Naive thymus-derived CD4-positive, alpha-beta T cell (primary cell): ENCODE measurements at regions of chr17 and their contacts with region 1.

Region 1: DNA sequence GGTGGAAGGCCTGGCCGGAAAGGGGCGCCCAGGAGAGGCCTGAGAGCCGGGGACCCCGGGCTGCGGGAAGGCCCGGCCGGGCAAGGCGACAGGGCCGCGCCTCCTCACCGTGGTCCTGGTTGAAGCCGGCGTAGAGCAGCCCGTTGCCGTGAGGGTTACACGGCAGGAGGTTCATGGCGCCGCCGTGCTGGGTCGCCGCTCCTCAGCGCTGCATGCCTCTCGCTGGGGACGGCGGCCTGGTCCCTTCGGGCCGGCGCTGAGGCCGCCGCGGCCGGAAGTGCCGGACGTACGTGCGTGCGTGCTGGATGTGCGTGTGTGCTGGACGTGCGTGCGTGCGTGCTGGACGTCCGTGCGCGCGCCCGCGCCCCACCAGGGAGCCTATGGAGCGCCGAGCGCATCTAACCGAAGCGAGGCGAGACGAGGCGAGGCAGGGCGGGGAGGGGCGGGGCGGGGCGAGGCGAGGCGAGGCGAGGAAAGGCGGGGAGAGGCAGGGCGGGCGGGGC is at the start of gene WDR45B:
- DNase-seq: peak; percentile 68 to 90 (median 87)
- ATAC-seq: peak; percentile 97
- H3K4me3 ChIP-seq: peak within 1 kb of the TSS; percentile 90
- H3K4me3 Mint-ChIP-seq: peak within 1 kb of the TSS; percentile 78 to 92 (median 84)
- H3K27ac ChIP-seq: peak within 1 kb of the TSS; percentile 94
- H3K27ac Mint-ChIP-seq: peak within 1 kb of the TSS; percentile 65 to 88 (median 83)
- H3K4me1 ChIP-seq: peaks cover 11 to 22% of the 10 kb centered on the region in 2 donors
- H3K4me1 Mint-ChIP-seq: peaks cover 23 to 39% (median 30%) of the 10 kb centered on the region in 7 donors
- H3K27me3 ChIP-seq: no peaks in the 10 kb centered on the region
- H3K27me3 Mint-ChIP-seq: no peaks in the 10 kb centered on the region
- total RNA-seq, gene WDR45B: 44.9 to 91.6 (median 68.4) TPM

Region 2: DNA sequence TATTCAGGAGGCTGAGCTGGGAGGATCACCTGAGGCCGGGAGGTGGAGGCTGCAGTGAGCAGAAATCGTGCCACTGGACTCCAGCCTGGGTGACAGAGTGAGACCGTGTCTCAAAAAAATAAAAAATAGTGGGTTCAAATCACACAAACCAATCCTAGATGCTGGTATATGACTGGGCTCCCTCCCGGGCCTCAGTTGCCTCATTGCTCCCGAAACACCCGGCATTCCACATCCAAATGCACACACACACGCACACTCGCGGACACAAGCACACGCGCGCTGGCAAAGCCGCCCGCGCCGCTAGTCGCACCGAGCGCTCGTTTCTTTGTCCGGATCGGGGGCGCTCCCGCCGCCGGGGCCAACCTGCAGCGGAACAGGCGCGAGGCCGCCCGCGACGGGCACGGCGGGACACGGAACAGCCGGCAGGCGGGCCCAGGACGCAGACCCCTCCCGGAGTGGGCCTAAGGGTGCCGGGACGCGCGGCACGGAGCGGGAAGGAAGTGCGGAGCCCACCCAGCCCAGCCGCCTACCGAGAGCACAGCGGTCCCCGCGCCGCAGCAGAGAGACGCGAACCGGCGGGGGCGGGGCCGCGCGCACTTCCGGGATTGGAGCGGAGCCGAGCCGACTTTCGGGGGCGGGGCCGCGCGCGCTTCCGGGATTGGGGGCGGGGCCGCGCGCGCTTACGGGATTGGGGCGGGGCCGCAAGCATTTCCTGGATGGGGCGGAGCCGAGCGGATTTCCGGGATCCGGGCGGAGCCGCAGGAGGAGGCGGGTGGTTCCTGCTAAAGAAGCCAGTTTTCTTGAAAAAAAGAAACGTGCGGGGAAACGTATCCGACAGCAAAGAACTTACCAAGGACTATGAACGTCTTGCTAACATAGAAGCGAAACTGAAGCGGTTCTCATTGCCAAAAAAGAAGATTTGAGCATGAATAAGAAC is 197.8 kb before region 1 on chr17 and contains the start of gene CYBC1:
- CTCF ChIA-PET with region 1: no interaction called
- POLR2A ChIA-PET with region 1: no interaction called
- intact Hi-C with region 1: loop called (anchors 1 kb)
- DNase-seq: peak; percentile 88 to 97 (median 94)
- ATAC-seq: peak; percentile 91
- H3K4me3 ChIP-seq: peak within 1 kb of the TSS; percentile 92
- H3K4me3 Mint-ChIP-seq: peak within 1 kb of the TSS; percentile 93 to 99 (median 98)
- H3K27ac ChIP-seq: peak within 1 kb of the TSS; percentile 86
- H3K27ac Mint-ChIP-seq: peak within 1 kb of the TSS; percentile 92 to 99 (median 97)
- H3K4me1 ChIP-seq: peaks cover 14 to 22% of the 10 kb centered on the region in 2 donors
- H3K4me1 Mint-ChIP-seq: peaks cover 22 to 49% (median 33%) of the 10 kb centered on the region in 7 donors
- H3K27me3 ChIP-seq: no peaks in the 10 kb centered on the region
- H3K27me3 Mint-ChIP-seq: no peaks in the 10 kb centered on the region
- total RNA-seq, gene CYBC1: 112 to 385 (median 199) TPM

Region 3: GRCh38 chr17:82494236-82495055 is 153.8 kb before region 1 on chr17:
- CTCF ChIA-PET with region 1: no interaction called
- POLR2A ChIA-PET with region 1: no interaction called
- intact Hi-C with region 1: loop called in 1 of 2 experiments (anchors 10 kb)
- DNase-seq: peak; percentile 68 to 92 (median 80)
- ATAC-seq: peak; percentile 80
- H3K4me3 ChIP-seq: no peak overlapping the region
- H3K4me3 Mint-ChIP-seq: peak overlapping the region in 9 of 10 donors; percentile 14 to 84 (median 65)
- H3K27ac ChIP-seq: peak overlapping the region; percentile 28
- H3K27ac Mint-ChIP-seq: peak overlapping the region; percentile 77 to 94 (median 87)
- H3K4me1 ChIP-seq: peaks cover 0 to 9% of the 10 kb centered on the region in 2 donors
- H3K4me1 Mint-ChIP-seq: peaks cover 8 to 33% (median 25%) of the 10 kb centered on the region in 7 donors
- H3K27me3 ChIP-seq: no peaks in the 10 kb centered on the region
- H3K27me3 Mint-ChIP-seq: peaks cover 0 to 2% (median 0%) of the 10 kb centered on the region in 5 donors

Region 4: GRCh38 chr17:82592767-82593589 is 55.2 kb before region 1 on chr17:
- CTCF ChIA-PET with region 1: no interaction called
- POLR2A ChIA-PET with region 1: no interaction called
- intact Hi-C with region 1: loop called in 1 of 2 experiments (anchors 2 kb)
- DNase-seq: peak in 8 of 9 donors; percentile 28 to 81 (median 71)
- ATAC-seq: peak; percentile 68
- H3K4me3 ChIP-seq: peak overlapping the region; percentile 81
- H3K4me3 Mint-ChIP-seq: peak overlapping the region; percentile 72 to 86 (median 80)
- H3K27ac ChIP-seq: peak overlapping the region; percentile 70
- H3K27ac Mint-ChIP-seq: peak overlapping the region; percentile 75 to 94 (median 90)
- H3K4me1 ChIP-seq: peaks cover 24 to 31% of the 10 kb centered on the region in 2 donors
- H3K4me1 Mint-ChIP-seq: peaks cover 19 to 52% (median 36%) of the 10 kb centered on the region in 7 donors
- H3K27me3 ChIP-seq: no peaks in the 10 kb centered on the region
- H3K27me3 Mint-ChIP-seq: no peaks in the 10 kb centered on the region

Region 5: DNA sequence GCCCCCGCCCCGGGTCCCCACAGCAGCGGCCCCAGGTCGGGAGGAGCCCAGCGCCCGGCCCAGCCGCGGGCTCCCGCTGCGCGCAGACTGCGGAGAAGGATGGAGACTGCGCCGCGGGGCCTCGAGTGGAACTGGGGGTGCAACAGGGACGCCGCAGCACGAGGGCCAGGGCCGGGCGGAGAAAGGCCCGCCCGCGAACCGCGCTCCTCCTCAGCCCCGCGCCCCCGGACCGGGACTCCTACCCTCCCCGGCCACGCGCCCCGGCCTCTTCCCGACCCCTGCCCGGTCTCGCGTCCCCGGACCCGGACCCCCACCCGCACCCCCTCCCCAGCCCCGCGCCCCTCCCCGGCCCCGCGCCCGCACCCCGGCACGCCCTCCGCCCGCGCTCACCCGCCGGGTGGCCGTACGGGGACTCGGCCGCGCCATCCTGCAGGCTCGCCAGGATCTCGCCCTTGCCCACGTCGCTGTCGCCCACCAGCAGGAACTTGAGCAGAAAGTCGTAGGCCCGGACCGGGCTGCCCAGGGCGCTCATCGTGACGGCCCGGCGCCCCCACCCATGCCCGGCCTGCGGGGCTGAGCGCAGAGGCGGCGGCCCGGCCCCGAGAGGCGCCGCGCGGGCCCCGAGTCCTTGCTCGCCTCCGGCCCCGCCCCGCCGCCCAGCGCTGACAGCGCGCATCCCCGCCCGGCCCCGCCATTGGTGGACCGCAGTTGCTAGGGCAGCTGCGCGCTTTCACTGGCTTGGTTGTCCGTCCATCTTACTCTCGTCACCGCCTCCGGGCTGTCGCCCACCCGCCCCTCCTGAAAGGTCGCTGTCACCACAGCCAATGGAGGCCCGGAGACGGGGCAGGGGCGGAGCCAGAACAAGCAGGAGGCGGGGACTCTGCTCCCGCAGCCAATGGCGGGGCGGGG is 50.1 kb after region 1 on chr17 and contains the start of gene RAB40B:
- CTCF ChIA-PET with region 1: no interaction called
- POLR2A ChIA-PET with region 1: interaction called, 3 read pairs
- intact Hi-C with region 1: loop called (anchors 1 kb)
- DNase-seq: peak; percentile 94 to 99 (median 99)
- ATAC-seq: peak; percentile 98
- H3K4me3 ChIP-seq: peak within 1 kb of the TSS; percentile 83
- H3K4me3 Mint-ChIP-seq: peak within 1 kb of the TSS; percentile 83 to 96 (median 89)
- H3K27ac ChIP-seq: peak within 1 kb of the TSS; percentile 61
- H3K27ac Mint-ChIP-seq: peak within 1 kb of the TSS in 6 of 9 donors; percentile 33 to 87 (median 76)
- H3K4me1 ChIP-seq: peaks cover 5 to 8% of the 10 kb centered on the region in 2 donors
- H3K4me1 Mint-ChIP-seq: peaks cover 0 to 16% (median 7%) of the 10 kb centered on the region in 7 donors
- H3K27me3 ChIP-seq: no peaks in the 10 kb centered on the region
- H3K27me3 Mint-ChIP-seq: peaks cover 0 to 16% (median 0%) of the 10 kb centered on the region in 5 donors
- total RNA-seq, gene RAB40B: 2.8 to 6.1 (median 3.6) TPM

Region 6: DNA sequence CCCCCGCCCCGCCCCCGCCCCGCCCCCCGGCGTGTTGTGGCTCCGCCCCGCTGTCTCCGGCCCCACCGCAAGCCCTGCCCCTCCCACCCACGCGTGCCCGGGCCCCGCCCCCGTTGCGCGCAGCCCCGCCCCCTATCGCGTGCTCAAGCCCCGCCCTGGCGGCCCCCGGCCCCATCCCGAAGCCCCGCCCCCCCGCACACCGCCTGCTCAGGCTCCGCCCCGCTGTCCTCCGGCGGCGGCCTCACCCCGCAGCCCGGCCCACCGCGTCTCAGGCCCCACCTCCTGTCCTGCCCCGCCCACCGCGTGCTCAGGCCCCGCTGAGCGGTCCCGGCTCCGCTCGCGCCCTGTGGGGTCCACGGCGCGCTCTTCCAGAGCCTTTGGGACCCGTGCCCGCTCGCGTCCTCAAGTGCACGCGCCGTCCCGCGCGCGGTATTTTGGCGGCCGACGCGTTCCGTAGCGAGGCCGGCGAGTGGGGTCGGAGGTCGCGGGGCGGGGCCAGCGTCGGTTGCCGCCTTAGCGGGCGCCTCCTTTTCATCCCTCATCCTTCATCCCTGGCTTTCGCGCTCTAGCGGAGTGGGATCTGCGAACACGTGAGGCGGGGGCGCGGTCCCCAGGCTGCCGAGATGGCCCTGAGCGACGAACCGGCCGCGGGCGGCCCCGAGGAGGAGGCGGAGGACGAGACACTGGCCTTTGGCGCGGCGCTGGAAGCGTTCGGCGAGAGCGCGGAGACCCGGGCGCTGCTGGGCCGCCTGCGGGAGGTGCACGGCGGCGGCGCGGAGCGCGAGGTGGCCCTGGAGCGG is 103.6 kb after region 1 on chr17 and contains the start of gene TBCD:
- CTCF ChIA-PET with region 1: no interaction called
- POLR2A ChIA-PET with region 1: no interaction called
- intact Hi-C with region 1: loop called (anchors 1 kb)
- DNase-seq: peak; percentile 80 to 95 (median 90)
- ATAC-seq: peak; percentile 91
- H3K4me3 ChIP-seq: peak within 1 kb of the TSS; percentile 80
- H3K4me3 Mint-ChIP-seq: peak within 1 kb of the TSS; percentile 68 to 91 (median 80)
- H3K27ac ChIP-seq: peak within 1 kb of the TSS; percentile 74
- H3K27ac Mint-ChIP-seq: peak within 1 kb of the TSS in 7 of 9 donors; percentile 11 to 77 (median 58)
- H3K4me1 ChIP-seq: peaks cover 7 to 8% of the 10 kb centered on the region in 2 donors
- H3K4me1 Mint-ChIP-seq: peaks cover 18 to 34% (median 26%) of the 10 kb centered on the region in 7 donors
- H3K27me3 ChIP-seq: no peaks in the 10 kb centered on the region
- H3K27me3 Mint-ChIP-seq: no peaks in the 10 kb centered on the region
- total RNA-seq, gene TBCD: 99.2 to 255 (median 226) TPM

Region 7: DNA sequence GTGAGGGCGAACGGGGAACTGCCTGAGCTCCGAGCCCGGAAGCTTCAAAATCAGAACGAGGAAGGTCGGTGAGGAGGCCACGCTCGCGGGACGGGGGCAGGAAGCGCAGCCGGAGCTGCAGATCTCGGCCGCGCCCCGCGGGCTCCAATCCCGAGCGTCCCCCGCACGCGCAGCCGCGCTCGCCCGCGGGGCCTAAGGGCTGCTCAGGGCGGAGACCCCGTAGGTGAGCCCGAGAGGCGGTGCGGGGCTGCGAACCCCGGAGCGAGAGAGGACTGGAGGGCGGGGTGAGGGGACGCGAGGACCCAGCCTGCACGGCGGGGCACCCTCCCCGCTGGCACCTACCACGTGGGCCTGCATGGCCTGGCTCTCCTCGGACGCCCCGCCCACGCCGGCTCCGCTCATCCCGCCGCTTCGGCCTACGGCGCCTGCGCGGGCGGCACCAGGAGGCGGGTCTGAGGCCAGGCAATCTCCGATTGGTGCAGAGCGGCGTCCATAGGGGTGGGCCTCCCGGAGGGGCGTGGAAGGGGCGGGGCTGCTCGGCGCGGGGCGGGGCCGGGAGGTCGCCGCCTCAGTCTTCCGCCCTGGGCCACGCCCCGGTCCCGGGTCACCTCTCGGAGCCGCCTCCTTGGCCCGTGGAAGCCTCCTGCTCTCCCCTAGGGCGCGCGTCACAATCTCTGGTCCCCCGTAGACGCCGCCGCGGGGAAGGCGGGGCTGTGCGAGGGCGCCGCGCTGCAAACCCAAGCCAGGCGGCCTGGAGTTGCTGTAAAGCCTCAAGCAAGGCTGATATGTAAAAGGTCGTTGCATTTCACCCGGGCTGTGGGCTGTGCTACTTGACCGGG is 403.4 kb after region 1 on chr17:
- CTCF ChIA-PET with region 1: no interaction called
- POLR2A ChIA-PET with region 1: no interaction called
- intact Hi-C with region 1: loop called (anchors 1 to 2 kb)
- DNase-seq: peak; percentile 97 to 100 (median 99)
- ATAC-seq: peak; percentile 94
- H3K4me3 ChIP-seq: peak overlapping the region; percentile 75
- H3K4me3 Mint-ChIP-seq: peak overlapping the region; percentile 68 to 91 (median 83)
- H3K27ac ChIP-seq: peak overlapping the region; percentile 91
- H3K27ac Mint-ChIP-seq: peak overlapping the region; percentile 56 to 94 (median 89)
- H3K4me1 ChIP-seq: peaks cover 22 to 26% of the 10 kb centered on the region in 2 donors
- H3K4me1 Mint-ChIP-seq: peaks cover 17 to 39% (median 20%) of the 10 kb centered on the region in 7 donors
- H3K27me3 ChIP-seq: no peaks in the 10 kb centered on the region
- H3K27me3 Mint-ChIP-seq: no peaks in the 10 kb centered on the region